Transverse colon (tissue), 4 donors: ENCODE measurements at regions of chr6 and their contacts with region 1.

Region 1: DNA sequence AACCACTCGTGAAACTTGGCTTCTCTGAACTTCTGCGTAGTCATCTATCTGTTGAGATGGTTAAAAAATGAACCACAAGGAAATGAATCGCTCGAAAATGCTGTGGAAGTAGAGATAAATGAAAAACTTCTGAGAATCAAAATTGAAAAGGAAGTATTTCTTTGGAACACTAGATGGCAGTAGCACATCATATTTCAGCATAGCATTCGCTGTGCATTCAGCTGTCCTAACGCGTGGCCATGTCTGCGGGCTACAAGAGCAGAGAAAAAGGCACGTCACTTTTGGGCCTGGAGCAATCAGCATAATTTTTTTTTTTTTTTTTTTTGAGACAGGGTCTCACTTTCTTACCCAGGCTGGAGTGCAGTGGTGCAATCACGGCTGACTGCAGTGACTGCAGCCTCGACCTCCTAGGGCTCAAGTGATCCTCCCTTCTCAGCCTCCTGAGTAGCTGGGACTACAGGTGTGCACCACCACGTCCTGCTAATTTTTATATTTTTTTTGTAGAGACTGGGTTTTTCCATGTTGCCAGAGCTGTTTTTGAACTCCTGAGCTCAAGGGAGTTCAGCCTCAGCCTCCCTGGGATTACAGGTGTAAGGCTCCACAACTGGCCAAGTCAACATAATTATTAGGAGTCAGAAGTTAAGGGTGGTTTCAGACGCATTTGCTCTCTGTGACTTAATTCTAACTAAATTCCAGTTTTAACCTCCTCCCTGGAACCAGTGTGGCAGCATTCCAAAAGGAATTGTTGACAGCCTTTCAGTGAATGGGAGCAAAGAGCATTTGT is 8.8 kb upstream of the PERP start:
- DNase-seq: peak; percentile 42
- H3K4me3 ChIP-seq: no peak overlapping the region
- H3K27ac ChIP-seq: no peak overlapping the region
- H3K4me1 ChIP-seq: no peaks in the 10 kb centered on the region
- H3K27me3 ChIP-seq: peaks cover 8% of the 10 kb centered on the region
- CTCF ChIP-seq: peak; percentile 65 to 86 (median 74)
- EP300 ChIP-seq: no peak
- POLR2A ChIP-seq: no peak

Region 2: DNA sequence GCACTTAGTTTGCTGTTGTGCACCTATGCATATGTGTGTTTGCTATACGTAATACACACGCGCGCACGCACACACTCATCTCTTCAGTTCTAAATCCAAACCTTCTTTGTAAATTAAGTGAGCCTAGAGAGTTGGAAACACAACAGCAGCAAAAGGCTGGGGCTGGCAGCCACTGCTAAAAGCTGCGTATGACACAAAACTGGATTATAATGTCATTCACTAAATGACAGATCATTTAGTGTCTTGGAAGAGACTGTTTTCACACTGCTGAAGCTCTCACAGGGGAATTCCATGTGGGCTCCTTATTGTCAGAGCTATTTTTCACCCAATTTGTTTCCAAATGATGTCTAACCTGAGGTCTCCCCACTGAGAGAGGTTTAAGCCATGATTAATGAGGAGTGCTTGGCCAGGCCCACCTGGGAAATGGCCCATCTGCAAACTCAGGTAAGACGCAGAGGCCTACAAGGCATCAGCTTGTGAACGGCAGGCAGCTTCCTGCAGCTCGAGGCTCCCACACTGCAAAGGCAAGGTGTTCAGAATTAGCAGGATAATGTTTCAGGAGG is 716.1 kb before region 1 on chr6:
- in situ Hi-C with region 1: no loop called
- intact Hi-C with region 1: no loop called
- DNase-seq: no peak
- H3K4me3 ChIP-seq: no peak overlapping the region
- H3K27ac ChIP-seq: no peak overlapping the region
- H3K4me1 ChIP-seq: no peaks in the 10 kb centered on the region
- H3K27me3 ChIP-seq: peaks cover 3% of the 10 kb centered on the region
- CTCF ChIP-seq: no peak
- EP300 ChIP-seq: no peak
- POLR2A ChIP-seq: no peak

Region 3: GRCh38 chr6:137697267-137697938 is 418.7 kb before region 1 on chr6:
- in situ Hi-C with region 1: loop called in 3 of 4 experiments (anchors 25 kb)
- intact Hi-C with region 1: loop called (anchors 10 kb)
- DNase-seq: peak; percentile 22
- H3K4me3 ChIP-seq: no peak overlapping the region
- H3K27ac ChIP-seq: peak overlapping the region; percentile 31 to 51 (median 46)
- H3K4me1 ChIP-seq: peaks cover 6 to 17% (median 12%) of the 10 kb centered on the region in 4 donors
- H3K27me3 ChIP-seq: no peaks in the 10 kb centered on the region
- CTCF ChIP-seq: peak in 4 of 5 experiments; percentile 17 to 53 (median 40)
- EP300 ChIP-seq: no peak
- POLR2A ChIP-seq: no peak

Region 4: DNA sequence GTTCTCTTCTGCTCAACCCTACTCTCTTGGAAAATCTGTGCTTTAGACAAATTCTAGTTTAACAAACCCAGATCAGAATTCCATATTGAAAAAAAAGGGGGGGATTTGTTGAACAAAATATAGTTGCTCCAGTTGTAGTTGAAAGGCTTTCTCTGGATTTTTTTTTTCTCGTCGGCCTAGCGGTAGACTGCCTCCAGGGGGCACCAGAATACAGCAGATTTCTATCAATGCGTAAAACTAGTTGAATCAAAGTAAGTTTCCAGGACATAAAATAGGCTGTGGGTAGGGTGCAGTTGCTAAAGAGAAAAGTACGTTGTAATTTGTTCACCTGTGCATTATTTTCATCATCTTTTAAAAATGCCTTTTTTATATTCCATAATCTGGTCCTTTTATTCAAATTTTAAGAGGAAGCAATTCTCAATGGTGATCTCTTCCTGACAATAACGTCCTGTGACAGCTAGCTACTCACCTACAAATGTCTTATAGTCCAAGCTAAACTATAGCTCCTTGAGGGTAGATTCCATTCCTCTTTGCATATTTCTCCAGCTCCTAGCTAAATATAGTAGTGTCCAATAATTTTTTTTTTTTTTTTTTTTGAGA is 114.2 kb before region 1 on chr6:
- in situ Hi-C with region 1: loop called in 3 of 4 experiments (anchors 5 to 10 kb)
- intact Hi-C with region 1: loop called (anchors 2 kb)
- DNase-seq: peak; percentile 74
- H3K4me3 ChIP-seq: no peak overlapping the region
- H3K27ac ChIP-seq: no peak overlapping the region
- H3K4me1 ChIP-seq: peaks cover 0 to 3% (median 0%) of the 10 kb centered on the region in 4 donors
- H3K27me3 ChIP-seq: no peaks in the 10 kb centered on the region
- CTCF ChIP-seq: peak; percentile 83 to 93 (median 88)
- EP300 ChIP-seq: no peak
- POLR2A ChIP-seq: no peak

Region 5: DNA sequence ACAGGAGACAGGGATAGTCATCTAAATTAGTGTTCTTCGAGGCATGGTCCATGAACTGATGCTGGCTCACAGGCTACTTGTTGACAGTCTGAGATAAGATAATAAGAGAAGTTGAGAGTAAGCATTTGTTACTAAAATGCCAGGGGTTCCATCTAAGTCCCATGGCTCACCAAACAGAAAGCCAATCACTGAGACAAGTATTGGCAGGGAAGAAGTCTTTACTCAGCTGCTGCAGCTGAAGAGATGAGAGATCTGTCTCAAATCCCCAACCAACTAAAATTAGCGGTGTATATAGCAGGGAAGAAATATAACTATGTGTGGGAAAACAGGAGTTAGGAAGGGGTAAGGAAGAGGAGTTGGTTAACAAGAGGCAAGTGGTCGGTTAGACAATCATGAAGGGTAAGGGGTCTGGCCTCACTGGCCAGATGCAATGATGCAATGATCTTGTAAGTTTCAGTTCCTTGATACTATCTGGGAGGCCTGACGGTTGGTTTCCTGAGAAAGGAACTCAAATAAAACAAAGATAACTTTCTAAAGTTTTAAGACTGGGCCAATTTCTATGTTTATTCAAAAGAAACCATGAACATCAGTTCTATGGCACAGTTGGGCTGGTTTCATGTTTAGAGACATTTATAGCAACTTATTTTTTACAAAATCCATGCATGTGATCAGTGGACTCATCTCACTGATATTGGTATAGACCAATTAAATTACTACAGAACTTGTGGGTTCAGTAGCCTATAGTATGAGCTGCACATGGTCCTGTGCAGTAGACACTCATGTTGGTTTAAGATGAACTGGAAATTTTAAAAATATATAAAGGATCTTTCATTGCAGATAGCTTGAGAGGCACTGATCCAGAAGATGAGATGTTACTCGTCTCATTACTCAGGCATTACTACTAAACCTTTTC is 278.1 kb after region 1 on chr6:
- in situ Hi-C with region 1: loop called in 1 of 4 experiments (anchors 10 kb)
- intact Hi-C with region 1: no loop called
- DNase-seq: no peak
- H3K4me3 ChIP-seq: no peak overlapping the region
- H3K27ac ChIP-seq: no peak overlapping the region
- H3K4me1 ChIP-seq: no peaks in the 10 kb centered on the region
- H3K27me3 ChIP-seq: no peaks in the 10 kb centered on the region
- CTCF ChIP-seq: no peak
- EP300 ChIP-seq: no peak
- POLR2A ChIP-seq: no peak

Region 6: GRCh38 chr6:138509371-138509770 is 393.3 kb after region 1 on chr6:
- in situ Hi-C with region 1: loop called in 2 of 4 experiments (anchors 10 to 25 kb)
- intact Hi-C with region 1: loop called (anchors 10 kb)
- DNase-seq: peak; percentile 72
- H3K4me3 ChIP-seq: no peak overlapping the region
- H3K27ac ChIP-seq: no peak overlapping the region
- H3K4me1 ChIP-seq: peaks cover 8 to 44% (median 25%) of the 10 kb centered on the region in 4 donors
- H3K27me3 ChIP-seq: no peaks in the 10 kb centered on the region
- CTCF ChIP-seq: peak; percentile 49 to 74 (median 62)
- EP300 ChIP-seq: no peak
- POLR2A ChIP-seq: no peak

Region 7: DNA sequence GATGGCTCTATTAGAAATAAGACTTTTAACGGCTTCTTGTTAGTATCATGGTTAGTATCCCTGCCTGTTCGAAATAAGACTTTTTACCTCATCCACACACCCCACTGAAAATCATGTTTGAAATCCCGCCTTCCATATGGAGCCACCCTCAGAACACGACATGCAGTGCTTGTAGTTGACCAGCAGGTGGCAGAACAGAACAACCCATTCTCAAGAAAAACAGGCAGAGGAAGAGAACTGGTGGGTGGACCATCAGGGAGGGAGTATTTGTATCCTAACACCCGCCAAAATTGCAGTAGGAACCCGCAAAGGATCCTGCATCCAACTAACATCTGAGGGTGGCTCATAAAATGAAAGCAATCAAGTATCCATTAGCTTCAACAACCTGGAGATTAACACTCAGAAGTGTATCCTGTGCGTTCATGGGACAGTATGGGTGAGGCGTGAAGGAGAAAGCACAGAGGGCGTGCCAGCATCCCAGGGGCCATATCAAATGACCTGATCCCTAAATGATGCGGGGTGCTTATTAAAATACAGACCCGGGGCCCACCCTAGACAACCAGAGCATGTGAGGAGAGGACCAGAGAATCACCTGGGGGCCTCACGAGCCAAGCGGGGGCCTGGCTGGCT is 472.9 kb after region 1 on chr6:
- in situ Hi-C with region 1: loop called in 3 of 4 experiments (anchors 25 kb)
- intact Hi-C with region 1: loop called (anchors 5 kb)
- DNase-seq: peak; percentile 52
- H3K4me3 ChIP-seq: no peak overlapping the region
- H3K27ac ChIP-seq: no peak overlapping the region
- H3K4me1 ChIP-seq: peaks cover 3 to 29% (median 12%) of the 10 kb centered on the region in 4 donors
- H3K27me3 ChIP-seq: no peaks in the 10 kb centered on the region
- CTCF ChIP-seq: peak; percentile 86 to 91 (median 90)
- EP300 ChIP-seq: no peak
- POLR2A ChIP-seq: no peak

Region 8: GRCh38 chr6:138773177-138774091 is 657.4 kb after region 1 on chr6 and contains the start of gene CCDC28A:
- in situ Hi-C with region 1: loop called in 2 of 4 experiments (anchors 10 to 25 kb)
- intact Hi-C with region 1: loop called (anchors 10 kb)
- DNase-seq: peak; percentile 94
- H3K4me3 ChIP-seq: peak within 1 kb of the TSS; percentile 65 to 75 (median 69)
- H3K27ac ChIP-seq: peak within 1 kb of the TSS; percentile 89 to 96 (median 93)
- H3K4me1 ChIP-seq: peaks cover 0 to 19% (median 13%) of the 10 kb centered on the region in 4 donors
- H3K27me3 ChIP-seq: no peaks in the 10 kb centered on the region
- CTCF ChIP-seq: peak in 2 of 5 experiments; percentile 36
- EP300 ChIP-seq: no peak
- POLR2A ChIP-seq: peak; percentile 70
- total RNA-seq, gene CCDC28A: 12.0 to 31.4 (median 19.6) TPM